Body of pancreas (tissue), 4 donors: ENCODE measurements at regions of chr5 and their contacts with region 1.

Region 1: GRCh38 chr5:33433303-33434240 is 7.2 kb upstream of the TARS1 start:
- DNase-seq: no peak
- ATAC-seq: no peak
- H3K4me3 ChIP-seq: no peak overlapping the region
- H3K27ac ChIP-seq: no peak overlapping the region
- H3K4me1 ChIP-seq: no peaks in the 10 kb centered on the region
- H3K27me3 ChIP-seq: no peaks in the 10 kb centered on the region
- CTCF ChIP-seq: no peak
- POLR2A ChIP-seq: no peak

Region 2: GRCh38 chr5:33933723-33934169 is 500.2 kb after region 1 on chr5:
- intact Hi-C with region 1: loop called (anchors 2 kb)
- DNase-seq: no peak
- ATAC-seq: no peak
- H3K4me3 ChIP-seq: no peak overlapping the region
- H3K27ac ChIP-seq: no peak overlapping the region
- H3K4me1 ChIP-seq: peaks cover 22% of the 10 kb centered on the region
- H3K27me3 ChIP-seq: peaks cover 0 to 11% of the 10 kb centered on the region in 2 donors
- CTCF ChIP-seq: no peak
- POLR2A ChIP-seq: no peak